Activated CD4-positive, alpha-beta T cell treated with anti-CD3 and anti-CD28 coated beads for 36 hours (primary cell): ENCODE measurements at regions of chr3 and their contacts with region 1.

Region 1: DNA sequence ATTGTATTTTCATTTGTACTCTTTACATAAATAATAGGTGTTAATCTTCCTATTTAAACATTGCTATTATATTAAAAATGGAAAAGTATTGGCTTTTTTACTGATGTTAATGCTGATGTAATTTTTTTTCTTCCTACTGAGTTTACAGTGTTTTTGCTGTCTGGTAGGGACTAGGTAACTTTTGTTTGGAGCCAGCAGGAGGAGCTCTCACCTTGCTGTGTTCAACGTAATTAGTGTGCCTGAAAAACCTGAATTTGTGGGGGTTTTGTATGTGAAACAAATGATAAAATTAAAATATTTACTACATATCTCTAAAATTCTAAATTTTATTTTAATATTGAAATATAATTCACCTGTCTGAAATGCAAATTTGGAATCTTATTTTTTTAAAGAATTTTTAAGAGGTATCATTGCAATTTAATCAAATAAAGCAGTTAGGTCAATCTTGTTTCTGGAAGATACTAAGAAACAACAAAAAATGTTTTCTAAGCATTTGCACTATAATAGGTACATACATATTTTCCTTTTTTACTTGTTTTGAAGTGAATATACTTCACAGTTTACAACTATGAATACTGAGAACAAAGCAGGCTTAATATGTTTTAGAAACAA is 48.8 kb downstream of the EPHA6 start:
- DNase-seq: peak; percentile 33
- ATAC-seq: no peak
- H3K4me3 Mint-ChIP-seq: no peak overlapping the region
- H3K27ac Mint-ChIP-seq: no peak overlapping the region
- H3K4me1 Mint-ChIP-seq: no peaks in the 10 kb centered on the region
- H3K27me3 Mint-ChIP-seq: no peaks in the 10 kb centered on the region

Region 2: GRCh38 chr3:97658668-97659285 is 795.5 kb after region 1 on chr3:
- CTCF ChIA-PET with region 1: no interaction called
- POLR2A ChIA-PET with region 1: no interaction called
- intact Hi-C with region 1: loop called (anchors 2 kb)
- DNase-seq: no peak
- ATAC-seq: no peak
- H3K4me3 Mint-ChIP-seq: no peak overlapping the region
- H3K27ac Mint-ChIP-seq: no peak overlapping the region
- H3K4me1 Mint-ChIP-seq: no peaks in the 10 kb centered on the region
- H3K27me3 Mint-ChIP-seq: peaks cover 2% of the 10 kb centered on the region

Region 3: DNA sequence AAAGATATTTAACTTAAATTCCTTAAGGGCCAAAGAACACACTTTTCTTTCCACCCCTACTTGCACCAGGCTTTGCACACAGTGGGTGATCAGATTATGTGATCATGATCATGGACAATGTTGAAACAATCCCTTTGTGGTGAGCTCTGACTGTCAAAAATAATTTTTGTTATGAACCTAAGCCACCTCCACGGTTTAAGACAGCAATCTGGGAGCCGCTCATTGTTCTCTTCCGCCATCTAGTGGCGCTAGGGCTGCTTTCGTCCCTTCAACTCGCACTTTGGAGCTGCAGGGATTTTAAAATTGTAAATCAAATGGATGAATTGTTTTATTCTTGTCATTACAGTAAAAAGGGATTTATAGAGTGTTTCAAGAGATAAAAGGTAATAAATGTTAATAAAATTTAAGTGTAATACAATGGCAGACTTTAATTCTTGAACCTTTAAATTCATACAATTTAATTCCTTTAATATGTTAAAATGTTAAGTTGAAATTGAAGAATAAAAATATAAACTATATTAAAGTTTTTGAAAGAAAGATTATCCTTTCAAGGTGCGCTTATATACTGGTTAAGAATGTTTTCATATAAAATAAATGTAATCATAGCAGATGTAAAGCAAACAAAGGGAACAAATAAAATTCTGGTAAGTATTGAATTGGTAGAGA is 856.1 kb after region 1 on chr3:
- CTCF ChIA-PET with region 1: interaction called, 5 read pairs
- POLR2A ChIA-PET with region 1: no interaction called
- intact Hi-C with region 1: loop called (anchors 1 to 5 kb)
- DNase-seq: peak; percentile 80
- ATAC-seq: peak; percentile 72
- H3K4me3 Mint-ChIP-seq: no peak overlapping the region
- H3K27ac Mint-ChIP-seq: no peak overlapping the region
- H3K4me1 Mint-ChIP-seq: no peaks in the 10 kb centered on the region
- H3K27me3 Mint-ChIP-seq: peaks cover 2% of the 10 kb centered on the region